ENCODE measurements at regions of chr2 and their contacts with region 1.

Region 1: GRCh38 chr2:219057709-219058540 is 2.8 kb downstream of the IHH start:
- DNase-seq: peak; percentile 46 to 59 (median 58)
- H3K4me3 ChIP-seq: no peak overlapping the region
- H3K4me3 Mint-ChIP-seq: peak overlapping the region in 1 of 2 donors; percentile 76
- H3K27ac ChIP-seq: no peak overlapping the region
- H3K27ac Mint-ChIP-seq: peak overlapping the region in 1 of 7 donors; percentile 6
- H3K4me1 ChIP-seq: peaks cover 9 to 15% of the 10 kb centered on the region in 2 donors
- H3K4me1 Mint-ChIP-seq: peaks cover 17% of the 10 kb centered on the region
- H3K27me3 ChIP-seq: peaks cover 51 to 78% of the 10 kb centered on the region in 2 donors
- H3K27me3 Mint-ChIP-seq: peaks cover 67 to 87% (median 82%) of the 10 kb centered on the region in 3 donors
- CTCF ChIP-seq: peak; percentile 91

Region 2: GRCh38 chr2:219020604-219021365 is 37.1 kb before region 1 on chr2:
- intact Hi-C with region 1: no loop called
- DNase-seq: no peak
- H3K4me3 ChIP-seq: no peak overlapping the region
- H3K4me3 Mint-ChIP-seq: no peak overlapping the region
- H3K27ac ChIP-seq: no peak overlapping the region
- H3K27ac Mint-ChIP-seq: peak overlapping the region in 1 of 7 donors; percentile 78
- H3K4me1 ChIP-seq: peaks cover 11 to 17% of the 10 kb centered on the region in 2 donors
- H3K4me1 Mint-ChIP-seq: peaks cover 11% of the 10 kb centered on the region
- H3K27me3 ChIP-seq: no peaks in the 10 kb centered on the region
- H3K27me3 Mint-ChIP-seq: peaks cover 6 to 7% (median 7%) of the 10 kb centered on the region in 3 donors
- CTCF ChIP-seq: no peak

Region 3: DNA sequence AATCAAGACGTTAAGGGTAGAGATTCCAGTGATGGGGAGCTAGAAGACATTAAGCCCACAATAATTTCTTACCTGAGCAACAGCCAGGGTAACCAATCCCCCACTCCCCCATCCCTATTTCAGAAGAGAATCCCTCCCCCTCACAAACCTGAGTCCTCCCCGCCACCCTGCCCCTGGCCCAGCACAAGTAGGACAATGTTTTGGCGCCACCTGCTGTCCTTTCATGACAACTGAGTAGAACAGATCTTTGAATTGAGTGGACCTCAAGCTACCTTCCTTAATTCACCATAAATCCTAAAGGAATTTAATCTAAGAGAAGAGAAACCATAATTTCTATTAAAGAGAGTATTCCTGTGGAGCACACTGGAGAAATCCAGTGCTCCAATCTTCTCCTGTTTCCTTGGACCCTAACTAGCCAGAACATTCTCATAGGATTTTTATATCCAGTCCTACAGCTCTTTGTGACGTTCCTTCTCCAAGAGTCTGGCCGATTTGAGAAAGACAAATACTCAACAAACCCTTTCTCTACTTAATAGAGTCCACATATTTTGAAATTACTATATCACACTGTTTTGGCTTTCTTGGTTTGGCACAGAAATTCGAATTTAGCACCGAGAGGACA is 61.6 kb after region 1 on chr2:
- intact Hi-C with region 1: loop called (anchors 2 to 5 kb)
- DNase-seq: peak; percentile 21 to 53 (median 32)
- H3K4me3 ChIP-seq: no peak overlapping the region
- H3K4me3 Mint-ChIP-seq: no peak overlapping the region
- H3K27ac ChIP-seq: no peak overlapping the region
- H3K27ac Mint-ChIP-seq: peak overlapping the region in 1 of 7 donors; percentile 59
- H3K4me1 ChIP-seq: peaks cover 8 to 9% of the 10 kb centered on the region in 2 donors
- H3K4me1 Mint-ChIP-seq: peaks cover 16% of the 10 kb centered on the region
- H3K27me3 ChIP-seq: no peaks in the 10 kb centered on the region
- H3K27me3 Mint-ChIP-seq: peaks cover 0 to 2% (median 0%) of the 10 kb centered on the region in 3 donors
- CTCF ChIP-seq: peak; percentile 77

Region 4: DNA sequence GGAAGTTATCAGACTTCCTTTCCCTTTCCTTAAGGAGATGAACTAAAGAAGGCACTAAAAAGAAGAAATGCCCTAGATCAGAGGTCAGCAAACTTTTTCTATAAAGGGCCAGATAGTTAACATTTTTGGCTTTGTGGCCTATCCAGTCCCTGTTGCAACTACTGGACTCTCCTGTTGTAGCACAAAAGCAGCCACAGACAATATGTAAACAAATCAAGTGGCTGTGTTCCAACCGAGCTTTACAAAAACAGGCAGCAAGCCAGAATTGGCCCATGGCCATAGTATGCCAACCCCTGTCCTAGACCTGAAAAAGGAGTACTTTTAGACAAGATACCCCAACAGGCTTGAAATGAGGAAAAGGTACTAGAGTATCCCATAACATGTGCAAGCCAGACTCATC is 91.7 kb after region 1 on chr2:
- intact Hi-C with region 1: loop called (anchors 2 to 5 kb)
- DNase-seq: no peak
- H3K4me3 ChIP-seq: no peak overlapping the region
- H3K4me3 Mint-ChIP-seq: no peak overlapping the region
- H3K27ac ChIP-seq: no peak overlapping the region
- H3K27ac Mint-ChIP-seq: no peak overlapping the region
- H3K4me1 ChIP-seq: no peaks in the 10 kb centered on the region
- H3K4me1 Mint-ChIP-seq: no peaks in the 10 kb centered on the region
- H3K27me3 ChIP-seq: no peaks in the 10 kb centered on the region
- H3K27me3 Mint-ChIP-seq: peaks cover 0 to 1% (median 0%) of the 10 kb centered on the region in 3 donors
- CTCF ChIP-seq: no peak

Region 5: DNA sequence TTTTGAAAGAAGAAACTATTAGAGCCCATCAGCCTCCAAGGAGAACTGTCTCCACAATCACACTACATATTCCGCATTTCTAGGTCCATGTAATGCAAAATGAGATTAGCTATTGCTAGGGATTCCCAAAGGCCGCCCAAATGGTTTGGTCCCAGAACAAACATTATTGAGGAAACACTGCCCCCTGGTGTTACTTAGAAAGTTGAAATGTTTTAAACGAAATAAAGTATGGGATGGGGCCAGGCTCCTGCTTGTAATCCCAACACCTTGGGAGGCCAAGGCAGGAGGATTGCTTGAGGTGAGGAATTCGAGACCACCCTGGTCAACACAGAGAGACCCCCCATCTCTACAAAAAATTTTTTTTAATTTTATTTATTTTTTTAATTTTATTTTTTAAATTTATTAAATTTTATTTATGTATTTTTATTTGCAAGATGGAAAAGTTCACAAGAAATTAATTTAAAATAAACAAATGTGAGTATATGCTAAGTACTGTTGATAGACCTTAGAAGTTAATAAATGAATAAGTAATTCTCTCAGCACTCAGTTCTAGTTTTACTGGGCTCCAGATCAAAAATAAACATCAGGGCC is 97.2 kb after region 1 on chr2:
- intact Hi-C with region 1: loop called (anchors 2 to 5 kb)
- DNase-seq: peak; percentile 47 to 72 (median 64)
- H3K4me3 ChIP-seq: no peak overlapping the region
- H3K4me3 Mint-ChIP-seq: no peak overlapping the region
- H3K27ac ChIP-seq: no peak overlapping the region
- H3K27ac Mint-ChIP-seq: no peak overlapping the region
- H3K4me1 ChIP-seq: peaks cover 7% of the 10 kb centered on the region in 2 donors
- H3K4me1 Mint-ChIP-seq: peaks cover 7% of the 10 kb centered on the region
- H3K27me3 ChIP-seq: no peaks in the 10 kb centered on the region
- H3K27me3 Mint-ChIP-seq: peaks cover 0 to 3% (median 2%) of the 10 kb centered on the region in 3 donors
- CTCF ChIP-seq: peak; percentile 70

Region 6: GRCh38 chr2:219308142-219309093 is 250.5 kb after region 1 on chr2:
- intact Hi-C with region 1: loop called in 1 of 2 experiments (anchors 10 kb)
- DNase-seq: peak; percentile 34 to 44 (median 35)
- H3K4me3 ChIP-seq: no peak overlapping the region
- H3K4me3 Mint-ChIP-seq: peak overlapping the region; percentile 4 to 77
- H3K27ac ChIP-seq: no peak overlapping the region
- H3K27ac Mint-ChIP-seq: peak overlapping the region in 1 of 7 donors; percentile 41
- H3K4me1 ChIP-seq: no peaks in the 10 kb centered on the region
- H3K4me1 Mint-ChIP-seq: peaks cover 5% of the 10 kb centered on the region
- H3K27me3 ChIP-seq: peaks cover 29 to 43% of the 10 kb centered on the region in 2 donors
- H3K27me3 Mint-ChIP-seq: peaks cover 42 to 68% (median 52%) of the 10 kb centered on the region in 3 donors
- CTCF ChIP-seq: no peak